Activated CD8-positive, alpha-beta memory T cell treated with anti-CD3 and anti-CD28 coated beads, Interleukin-2, amount 10 ng/mL, durations not matched to agents 7 days and 5 days (primary cell): ENCODE measurements at regions of chr17 and their contacts with region 1.

Region 1: DNA sequence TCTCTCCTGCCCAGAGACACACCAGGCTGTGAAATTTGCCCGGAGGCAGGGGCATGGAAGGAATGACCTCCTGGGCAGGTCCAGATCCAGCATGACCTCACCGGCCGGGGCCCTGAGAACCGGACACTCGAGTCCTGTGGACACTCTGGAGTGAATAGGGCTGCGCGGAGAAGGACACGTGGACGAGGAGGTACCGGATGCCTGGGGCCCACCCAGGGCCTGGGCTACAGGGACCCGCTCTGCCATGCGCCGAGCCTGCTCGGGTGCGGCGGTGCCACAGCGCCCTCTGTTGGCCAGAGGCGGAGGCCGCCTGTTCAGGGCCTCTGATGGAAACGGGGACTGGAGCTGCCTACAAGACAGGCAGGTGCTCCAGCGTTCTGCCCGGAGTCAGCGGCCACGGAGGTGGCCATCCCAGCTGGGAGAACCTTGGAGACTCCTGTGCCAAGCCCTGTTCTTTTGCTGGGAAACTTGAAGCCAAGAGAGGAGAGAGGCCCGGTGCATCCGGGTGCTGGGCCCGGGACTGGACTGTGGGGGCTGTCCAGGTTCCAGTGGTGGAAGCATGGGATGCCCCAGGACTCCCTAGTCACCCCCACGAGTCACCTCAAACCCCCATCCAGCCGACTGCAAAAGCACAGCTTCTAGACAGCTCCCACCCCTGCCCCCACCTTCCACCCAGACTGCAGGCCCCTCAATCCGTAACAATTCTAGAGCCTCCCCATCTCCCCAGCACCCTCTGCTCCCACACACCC is 19.3 kb upstream of the NXPH3 start:
- DNase-seq: peak; percentile 88
- ATAC-seq: peak; percentile 98
- H3K4me3 Mint-ChIP-seq: no peak overlapping the region
- H3K27ac Mint-ChIP-seq: peak overlapping the region; percentile 22
- H3K4me1 Mint-ChIP-seq: peaks cover 5% of the 10 kb centered on the region
- H3K27me3 Mint-ChIP-seq: peaks cover 14% of the 10 kb centered on the region

Region 2: GRCh38 chr17:49305926-49306325 is 250.5 kb before region 1 on chr17:
- CTCF ChIA-PET with region 1: interaction called, 12 read pairs
- DNase-seq: no peak
- ATAC-seq: no peak
- H3K4me3 Mint-ChIP-seq: no peak overlapping the region
- H3K27ac Mint-ChIP-seq: no peak overlapping the region
- H3K4me1 Mint-ChIP-seq: no peaks in the 10 kb centered on the region
- H3K27me3 Mint-ChIP-seq: no peaks in the 10 kb centered on the region

Region 3: DNA sequence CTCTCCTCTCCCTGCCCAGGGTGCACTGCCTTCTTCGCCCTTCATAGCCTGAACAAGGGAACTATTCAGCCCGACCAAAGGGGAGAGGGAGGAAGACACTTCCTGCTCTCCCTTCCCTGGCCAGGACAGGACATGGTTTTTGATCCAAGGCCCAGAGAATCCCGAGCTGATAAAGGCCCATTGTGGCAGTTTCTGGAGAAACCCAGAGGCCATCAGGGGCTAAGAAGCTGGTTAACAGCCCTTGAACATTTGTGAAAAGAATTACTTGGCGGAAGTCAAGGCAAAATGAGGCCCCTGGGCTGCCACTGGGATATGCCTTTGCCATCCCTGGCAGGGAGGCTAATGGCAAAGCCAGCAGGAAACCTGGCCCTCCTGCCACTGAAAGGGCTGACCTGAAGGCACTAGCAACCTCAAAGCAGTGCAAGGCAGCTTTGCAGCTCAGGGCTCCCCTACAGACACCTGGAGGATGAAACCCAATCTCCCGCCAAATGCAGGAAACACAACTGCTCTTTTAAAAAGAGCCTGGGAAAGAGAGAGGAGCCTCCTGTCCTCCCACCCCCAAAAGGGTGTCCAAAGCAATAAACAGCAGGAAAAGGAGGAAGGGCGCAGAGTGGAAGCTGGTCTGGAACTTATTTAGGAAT is 154.3 kb before region 1 on chr17:
- CTCF ChIA-PET with region 1: interaction called, 196 read pairs
- DNase-seq: no peak
- ATAC-seq: no peak
- H3K4me3 Mint-ChIP-seq: no peak overlapping the region
- H3K27ac Mint-ChIP-seq: no peak overlapping the region
- H3K4me1 Mint-ChIP-seq: peaks cover 41% of the 10 kb centered on the region
- H3K27me3 Mint-ChIP-seq: peaks cover 3% of the 10 kb centered on the region

Region 4: GRCh38 chr17:49434821-49435670 is 121.4 kb before region 1 on chr17:
- CTCF ChIA-PET with region 1: interaction called, 122 read pairs
- DNase-seq: peak; percentile 64
- ATAC-seq: peak; percentile 57
- H3K4me3 Mint-ChIP-seq: no peak overlapping the region
- H3K27ac Mint-ChIP-seq: no peak overlapping the region
- H3K4me1 Mint-ChIP-seq: peaks cover 2% of the 10 kb centered on the region
- H3K27me3 Mint-ChIP-seq: peaks cover 38% of the 10 kb centered on the region

Region 5: DNA sequence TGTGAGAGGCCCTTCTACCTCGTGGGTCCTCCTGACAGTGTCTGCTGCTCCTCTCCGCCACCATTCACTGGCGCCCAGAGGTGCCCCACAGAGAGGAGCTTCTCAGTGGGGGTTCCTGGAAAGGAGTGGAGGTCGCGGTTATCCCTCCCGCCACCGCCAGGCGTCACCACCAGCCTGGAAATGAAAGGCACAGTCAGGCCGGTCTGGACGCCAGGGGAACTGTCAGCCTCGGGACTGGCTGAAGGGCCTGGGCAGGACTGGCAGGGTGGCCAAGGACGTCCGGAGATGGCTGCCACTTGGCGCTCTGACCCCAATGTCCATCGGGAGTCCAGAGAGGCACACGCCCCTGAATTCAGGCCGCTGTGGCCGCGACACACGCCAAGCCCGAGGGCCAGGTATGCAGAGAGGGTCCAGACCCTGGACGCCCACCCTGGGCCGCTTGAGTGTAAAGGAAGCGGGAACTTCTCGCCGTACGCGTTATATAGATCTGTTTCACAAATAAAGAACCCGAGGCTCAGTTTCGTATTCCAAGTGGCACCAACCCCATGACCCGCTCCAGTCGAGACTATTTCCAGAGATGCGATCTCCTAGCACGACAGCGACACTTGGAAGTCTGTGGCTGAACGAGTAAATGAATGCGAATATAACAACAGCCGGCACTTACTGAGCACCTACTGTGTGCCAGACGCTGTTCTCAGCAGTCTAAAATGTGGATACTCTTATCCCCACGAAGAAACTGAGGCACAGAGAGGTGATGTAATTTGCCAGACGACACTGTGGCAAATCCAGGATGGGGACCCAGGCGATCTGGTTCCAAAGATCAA is 11.7 kb after region 1 on chr17:
- CTCF ChIA-PET with region 1: interaction called, 83 read pairs
- DNase-seq: peak; percentile 90
- ATAC-seq: peak; percentile 61
- H3K4me3 Mint-ChIP-seq: peak overlapping the region; percentile 63
- H3K27ac Mint-ChIP-seq: no peak overlapping the region
- H3K4me1 Mint-ChIP-seq: peaks cover 38% of the 10 kb centered on the region
- H3K27me3 Mint-ChIP-seq: peaks cover 51% of the 10 kb centered on the region

Region 6: DNA sequence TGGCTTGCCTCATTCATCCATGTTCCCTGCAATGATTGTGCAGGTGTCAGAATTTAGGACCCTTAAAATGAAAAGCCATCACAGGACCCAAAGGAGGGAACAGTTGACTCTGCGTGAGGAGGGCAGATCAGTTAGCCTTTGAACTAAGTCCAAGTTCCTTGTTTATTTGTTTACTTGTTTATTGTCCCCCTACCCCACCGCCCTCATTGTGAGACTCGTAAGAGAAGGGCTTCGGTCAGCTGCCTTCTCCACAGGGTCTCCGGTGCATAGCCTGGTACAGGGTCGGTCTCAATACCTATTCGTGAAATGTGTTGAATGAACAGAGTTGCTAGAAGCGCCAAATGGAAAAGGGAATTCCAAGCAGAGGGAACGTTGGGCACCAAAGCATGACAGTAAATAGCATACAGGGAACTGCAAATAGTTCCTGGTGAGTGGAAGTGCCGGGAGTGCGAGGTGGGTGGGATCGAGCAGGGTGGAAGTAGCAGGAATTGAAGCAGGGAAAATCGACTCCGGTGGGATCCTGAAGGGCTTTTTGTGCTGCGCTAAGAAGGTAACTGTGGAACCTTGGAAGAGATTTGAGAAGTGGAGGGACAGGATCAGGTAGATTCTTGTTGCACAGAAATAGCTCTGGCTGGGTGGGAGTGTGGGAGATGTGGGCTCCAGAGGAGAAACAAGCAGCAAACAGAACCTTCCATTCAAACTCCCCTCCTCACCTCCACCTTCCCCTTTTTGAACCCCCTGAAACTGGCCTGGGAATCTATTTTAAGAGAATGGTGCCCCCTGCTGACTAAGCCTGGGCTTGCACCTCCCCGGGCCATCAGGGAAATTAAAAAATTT is 138.7 kb after region 1 on chr17:
- CTCF ChIA-PET with region 1: interaction called, 31 read pairs
- DNase-seq: peak; percentile 83
- ATAC-seq: peak; percentile 38
- H3K4me3 Mint-ChIP-seq: no peak overlapping the region
- H3K27ac Mint-ChIP-seq: peak overlapping the region; percentile 83
- H3K4me1 Mint-ChIP-seq: peaks cover 33% of the 10 kb centered on the region
- H3K27me3 Mint-ChIP-seq: no peaks in the 10 kb centered on the region

Region 7: GRCh38 chr17:49830605-49831004 is 274.2 kb after region 1 on chr17:
- CTCF ChIA-PET with region 1: interaction called, 13 read pairs
- DNase-seq: no peak
- ATAC-seq: no peak
- H3K4me3 Mint-ChIP-seq: no peak overlapping the region
- H3K27ac Mint-ChIP-seq: no peak overlapping the region
- H3K4me1 Mint-ChIP-seq: no peaks in the 10 kb centered on the region
- H3K27me3 Mint-ChIP-seq: no peaks in the 10 kb centered on the region